Dorsolateral prefrontal cortex (tissue), 120 donors: ENCODE measurements at regions of chrX and their contacts with region 1.

Region 1: DNA sequence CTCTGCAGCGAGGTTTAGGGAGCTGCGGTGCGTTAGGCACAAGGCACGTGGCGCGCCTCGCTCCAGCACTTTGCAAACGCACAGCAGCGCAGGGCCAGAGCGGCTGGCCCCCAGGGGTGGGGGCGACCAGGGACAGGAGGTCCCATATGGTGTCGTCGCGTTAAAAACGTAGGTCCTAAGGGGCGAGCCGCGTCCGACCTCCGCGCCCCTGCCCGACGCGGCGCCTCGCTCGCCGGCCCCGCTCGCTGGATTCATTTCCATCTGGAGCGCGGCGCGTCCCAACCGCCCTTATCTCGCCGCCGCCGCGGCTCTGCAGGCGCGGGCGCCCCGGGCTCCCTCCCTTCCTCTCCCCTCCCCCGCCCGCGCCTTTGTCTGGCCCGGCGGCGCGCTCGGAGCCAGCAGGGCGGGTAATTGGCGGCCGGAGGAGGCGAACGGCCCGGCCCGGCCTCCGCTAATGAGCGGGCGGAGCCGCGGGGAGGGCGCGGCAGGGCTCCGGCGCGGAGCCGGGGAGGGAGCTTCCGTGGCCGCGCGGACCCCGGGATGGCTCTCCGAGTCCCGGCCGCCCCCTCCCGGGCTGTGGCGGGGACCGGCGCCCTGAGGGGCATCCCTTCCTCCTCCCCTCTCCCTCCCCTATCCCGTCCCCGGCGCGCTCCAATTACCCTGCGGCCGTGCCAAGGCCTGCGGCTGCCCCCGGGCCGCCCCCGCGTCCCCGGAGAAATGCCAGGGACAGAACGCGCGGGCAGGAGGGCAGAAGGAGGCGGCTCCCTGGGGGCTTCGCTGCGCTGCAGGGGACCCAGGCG is 409.0 kb downstream of the BCOR start:
- DNase-seq: peak; percentile 9 to 77 (median 51)
- H3K4me3 ChIP-seq: peak overlapping the region; percentile 18 to 65 (median 48)
- H3K27ac ChIP-seq: peak overlapping the region in 57 of 59 donors; percentile 21 to 89 (median 79)
- H3K27me3 ChIP-seq: peaks cover 0 to 91% (median 10%) of the 10 kb centered on the region in 45 donors
- CTCF ChIP-seq: peak in 2 of 56 donors; percentile 4 to 9

Region 2: DNA sequence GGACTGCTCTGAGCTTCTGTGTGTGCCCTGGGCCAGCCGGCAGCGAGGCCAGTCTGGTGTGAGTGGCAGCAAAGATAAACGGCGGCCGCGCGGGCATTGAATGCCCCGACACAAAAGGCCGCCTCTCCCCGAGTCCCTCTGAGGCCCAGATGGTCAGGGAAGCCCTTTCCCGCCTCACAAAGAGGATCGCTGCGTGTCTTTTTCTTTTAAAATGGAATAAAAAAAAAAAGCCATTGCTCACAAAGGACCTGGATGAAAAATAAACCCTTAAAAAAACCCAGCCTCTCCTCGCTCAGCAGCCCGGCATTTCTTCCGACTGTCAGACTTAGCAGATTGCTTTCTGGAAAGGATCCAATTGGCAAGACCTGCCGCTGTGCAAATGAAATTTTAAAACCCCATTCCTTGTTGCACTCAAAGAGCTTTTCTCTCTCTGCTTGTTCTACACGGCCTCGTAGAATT is 169.7 kb before region 1 on chrX:
- intact Hi-C with region 1: no loop called
- DNase-seq: peak in 3 of 10 donors; percentile 34 to 54 (median 35)
- H3K4me3 ChIP-seq: peak overlapping the region in 45 of 59 donors; percentile 1 to 54 (median 30)
- H3K27ac ChIP-seq: peak overlapping the region in 11 of 59 donors; percentile 3 to 76 (median 35)
- H3K27me3 ChIP-seq: peaks cover 0 to 68% (median 7%) of the 10 kb centered on the region in 45 donors
- CTCF ChIP-seq: no peak

Region 3: GRCh38 chrX:39677978-39678791 is 10.6 kb before region 1 on chrX:
- intact Hi-C with region 1: loop called in 1 of 2 experiments (anchors 1 kb)
- DNase-seq: peak; percentile 11 to 89 (median 81)
- H3K4me3 ChIP-seq: no peak overlapping the region
- H3K27ac ChIP-seq: peak overlapping the region in 58 of 59 donors; percentile 3 to 94 (median 83)
- H3K27me3 ChIP-seq: peaks cover 0 to 41% (median 4%) of the 10 kb centered on the region in 45 donors
- CTCF ChIP-seq: peak in 2 of 56 donors; percentile 12 to 21

Region 4: GRCh38 chrX:39755143-39756032 is 66.6 kb after region 1 on chrX:
- intact Hi-C with region 1: loop called in 1 of 2 experiments (anchors 10 kb)
- DNase-seq: peak in 7 of 10 donors; percentile 6 to 67 (median 61)
- H3K4me3 ChIP-seq: no peak overlapping the region
- H3K27ac ChIP-seq: peak overlapping the region in 28 of 59 donors; percentile 3 to 70 (median 33)
- H3K27me3 ChIP-seq: peaks cover 0 to 50% (median 4%) of the 10 kb centered on the region in 45 donors
- CTCF ChIP-seq: no peak

Region 5: GRCh38 chrX:40108959-40109287 is 420.1 kb after region 1 on chrX:
- intact Hi-C with region 1: loop called in 1 of 2 experiments (anchors 10 kb)
- DNase-seq: peak in 7 of 10 donors; percentile 54 to 81 (median 59)
- H3K4me3 ChIP-seq: peak overlapping the region; percentile 12 to 75 (median 58)
- H3K27ac ChIP-seq: peak overlapping the region in 56 of 59 donors; percentile 38 to 92 (median 82)
- H3K27me3 ChIP-seq: peaks cover 0 to 94% (median 49%) of the 10 kb centered on the region in 45 donors
- CTCF ChIP-seq: peak in 1 of 56 donors; percentile 18